Calu3 (cell line): ENCODE measurements at regions of chr18 and their contacts with region 1.

Region 1: DNA sequence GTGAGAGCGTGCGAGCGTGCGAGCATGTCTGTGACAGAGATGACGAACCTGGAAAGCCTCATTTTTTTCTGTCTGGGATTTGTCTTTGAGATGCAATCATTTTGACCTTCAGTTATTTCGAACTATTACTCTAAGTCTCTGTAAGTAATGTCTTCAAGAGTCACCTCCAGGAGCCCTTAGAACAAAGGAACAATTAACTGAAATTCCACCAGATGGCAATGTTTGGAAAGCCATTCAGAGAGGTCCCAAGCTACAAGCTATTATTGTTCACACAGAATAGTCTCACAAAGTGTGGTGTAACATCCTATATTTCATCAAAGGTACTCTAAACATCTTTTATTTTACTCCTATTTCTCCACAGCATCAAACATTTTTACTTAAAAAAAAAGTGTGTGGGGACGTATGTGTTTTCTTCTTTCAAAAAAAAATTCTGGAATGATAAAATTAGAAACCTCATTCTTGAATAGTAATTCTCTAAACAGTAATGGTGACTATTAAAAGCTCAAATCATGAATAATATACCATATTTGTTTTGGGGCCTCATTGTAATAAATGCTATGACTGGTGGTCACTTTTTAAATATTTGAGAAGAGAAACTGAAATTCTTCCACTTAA is 35.1 kb upstream of the MAPRE2 start:
- DNase-seq: peak; percentile 36
- H3K4me3 Mint-ChIP-seq: no peak overlapping the region
- H3K27ac Mint-ChIP-seq: no peak overlapping the region
- H3K4me1 Mint-ChIP-seq: peaks cover 29% of the 10 kb centered on the region
- H3K27me3 Mint-ChIP-seq: no peaks in the 10 kb centered on the region
- CTCF ChIP-seq: peak; percentile 52

Region 2: DNA sequence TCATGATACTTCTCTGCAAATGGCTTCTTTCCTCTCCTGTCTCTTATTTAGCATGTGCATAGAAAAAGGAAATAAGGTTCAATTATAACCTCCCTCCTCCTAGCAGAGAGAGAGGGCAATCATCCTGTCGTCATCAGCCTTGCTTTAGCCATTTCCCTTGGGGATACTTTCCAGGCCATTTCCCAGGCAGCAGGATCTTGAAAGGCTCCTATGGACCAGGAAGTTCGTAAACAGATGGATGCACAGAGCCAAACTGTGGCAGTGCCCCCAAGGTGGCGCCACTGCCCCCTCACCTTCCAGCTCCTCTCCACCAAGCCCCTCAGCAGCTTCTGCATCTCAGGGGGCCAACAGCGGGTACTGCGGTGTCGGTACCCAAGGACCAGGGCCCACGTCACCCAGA is 138.6 kb before region 1 on chr18:
- CTCF ChIA-PET with region 1: no interaction called
- intact Hi-C with region 1: loop called (anchors 10 kb)
- DNase-seq: no peak
- H3K4me3 Mint-ChIP-seq: no peak overlapping the region
- H3K27ac Mint-ChIP-seq: no peak overlapping the region
- H3K4me1 Mint-ChIP-seq: no peaks in the 10 kb centered on the region
- H3K27me3 Mint-ChIP-seq: no peaks in the 10 kb centered on the region
- CTCF ChIP-seq: no peak

Region 3: DNA sequence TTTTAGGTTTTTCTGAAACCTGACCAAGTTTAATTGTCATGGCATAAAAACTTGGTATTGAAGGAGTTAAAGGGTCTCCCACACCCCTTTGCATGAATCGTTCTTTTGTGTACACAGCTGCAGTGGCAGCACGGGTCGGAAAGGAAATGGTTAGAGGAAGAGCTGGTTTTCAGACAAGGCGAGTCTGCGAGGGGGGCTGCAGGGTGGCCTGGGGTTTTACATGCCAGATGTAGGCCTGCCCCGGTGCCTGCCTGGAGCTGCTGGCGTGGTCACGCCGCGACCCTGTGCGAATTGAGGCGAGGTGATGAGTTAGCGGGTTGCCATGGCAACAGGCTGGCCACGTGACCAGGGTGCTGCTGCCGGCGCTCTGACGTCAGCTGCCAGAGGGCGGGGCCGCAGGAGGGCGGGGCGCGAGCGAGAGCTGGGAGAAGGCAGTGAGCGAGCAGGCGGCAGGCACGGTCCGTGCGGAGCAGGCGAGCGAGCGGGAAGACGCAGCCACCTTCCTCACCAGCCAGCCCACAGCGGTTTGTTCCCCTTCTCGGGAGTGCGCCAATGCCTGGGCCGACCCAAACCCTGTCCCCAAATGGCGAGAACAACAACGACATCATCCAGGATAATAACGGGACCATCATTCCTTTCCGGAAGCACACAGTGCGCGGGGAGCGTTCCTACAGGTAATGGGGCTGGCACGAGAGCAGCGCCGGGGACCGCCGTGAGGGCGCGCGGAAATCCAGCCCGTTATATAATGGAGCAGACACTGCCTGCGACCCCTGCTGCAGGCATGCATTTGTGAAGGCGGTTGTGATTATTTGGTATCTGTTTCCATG is 35.1 kb after region 1 on chr18 and contains the start of gene MAPRE2:
- CTCF ChIA-PET with region 1: interaction called, 7 read pairs
- intact Hi-C with region 1: loop called (anchors 5 kb)
- DNase-seq: peak; percentile 99
- H3K4me3 Mint-ChIP-seq: peak within 1 kb of the TSS; percentile 95
- H3K27ac Mint-ChIP-seq: peak within 1 kb of the TSS; percentile 100
- H3K4me1 Mint-ChIP-seq: peaks cover 26% of the 10 kb centered on the region
- H3K27me3 Mint-ChIP-seq: no peaks in the 10 kb centered on the region
- CTCF ChIP-seq: no peak
- total RNA-seq, gene MAPRE2: 31.4 and 32.9 TPM in 2 replicates

Region 4: GRCh38 chr18:35143622-35144596 is 137.8 kb after region 1 on chr18:
- CTCF ChIA-PET with region 1: interaction called, 49 read pairs
- intact Hi-C with region 1: loop called (anchors 1 kb)
- DNase-seq: peak; percentile 60
- H3K4me3 Mint-ChIP-seq: no peak overlapping the region
- H3K27ac Mint-ChIP-seq: no peak overlapping the region
- H3K4me1 Mint-ChIP-seq: no peaks in the 10 kb centered on the region
- H3K27me3 Mint-ChIP-seq: no peaks in the 10 kb centered on the region
- CTCF ChIP-seq: peak; percentile 64

Region 5: GRCh38 chr18:35355140-35355618 is 349.1 kb after region 1 on chr18:
- CTCF ChIA-PET with region 1: no interaction called
- intact Hi-C with region 1: loop called (anchors 1 kb)
- DNase-seq: peak; percentile 63
- H3K4me3 Mint-ChIP-seq: no peak overlapping the region
- H3K27ac Mint-ChIP-seq: no peak overlapping the region
- H3K4me1 Mint-ChIP-seq: no peaks in the 10 kb centered on the region
- H3K27me3 Mint-ChIP-seq: no peaks in the 10 kb centered on the region
- CTCF ChIP-seq: peak; percentile 35